Esophagus squamous epithelium (tissue), 5 donors: ENCODE measurements at regions of chr13 and their contacts with region 1.

Region 1: DNA sequence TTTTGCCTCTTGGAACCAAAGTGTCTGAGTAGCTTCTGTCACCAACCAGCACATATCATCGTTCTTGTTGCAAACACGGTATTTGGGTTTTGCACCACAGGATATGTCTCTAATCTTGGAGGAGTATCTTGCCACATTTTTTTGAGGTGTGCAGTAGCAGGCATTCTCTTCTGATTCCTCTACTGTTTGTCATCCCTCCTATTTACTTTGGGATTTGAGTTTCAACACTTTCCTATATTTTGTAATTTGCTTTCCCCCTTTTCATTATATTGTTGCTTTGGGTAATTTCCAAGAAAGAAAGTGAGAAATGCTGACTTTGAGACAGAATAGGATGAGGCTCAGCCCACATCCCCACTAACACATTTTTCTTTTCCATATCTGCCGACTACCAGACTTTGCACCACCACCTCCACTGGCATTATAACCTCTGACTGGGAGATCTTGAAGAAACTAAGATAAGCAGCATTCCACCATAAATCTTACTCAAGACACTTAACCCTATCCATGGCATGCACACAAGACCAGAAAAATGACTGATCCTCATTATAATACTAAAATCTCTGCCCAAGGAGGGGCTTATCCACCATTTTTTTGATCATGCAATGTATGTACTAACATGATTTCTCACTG is 12.0 kb upstream of the DZIP1 start:
- DNase-seq: no peak
- H3K4me3 ChIP-seq: no peak overlapping the region
- H3K27ac ChIP-seq: no peak overlapping the region
- H3K4me1 ChIP-seq: no peaks in the 10 kb centered on the region
- H3K27me3 ChIP-seq: peaks cover 0 to 7% (median 0%) of the 10 kb centered on the region in 4 donors
- CTCF ChIP-seq: no peak
- POLR2A ChIP-seq: no peak

Region 2: GRCh38 chr13:95540888-95541287 is 115.6 kb before region 1 on chr13:
- intact Hi-C with region 1: loop called (anchors 10 kb)
- DNase-seq: no peak
- H3K4me3 ChIP-seq: no peak overlapping the region
- H3K27ac ChIP-seq: no peak overlapping the region
- H3K4me1 ChIP-seq: peaks cover 0 to 30% (median under 1%) of the 10 kb centered on the region in 3 donors
- H3K27me3 ChIP-seq: no peaks in the 10 kb centered on the region
- CTCF ChIP-seq: no peak
- POLR2A ChIP-seq: no peak

Region 3: DNA sequence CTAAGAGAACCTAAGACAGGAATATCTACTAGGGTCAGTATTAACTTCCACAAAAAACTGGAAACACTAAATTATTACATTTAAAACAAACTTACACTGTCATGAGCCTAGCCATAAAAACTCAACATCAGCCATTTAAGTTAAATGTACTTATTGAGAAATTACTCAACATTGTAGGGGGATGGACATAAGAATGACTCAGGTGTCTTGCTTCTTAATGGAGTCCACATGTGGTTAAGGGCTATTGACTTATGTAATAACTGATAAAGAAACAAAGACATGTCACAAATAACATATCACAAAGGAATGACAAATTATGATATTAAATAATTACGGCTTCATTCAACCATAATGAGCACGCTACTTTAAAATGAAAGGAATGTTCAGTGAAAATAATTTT is 67.8 kb before region 1 on chr13:
- intact Hi-C with region 1: no loop called
- DNase-seq: no peak
- H3K4me3 ChIP-seq: no peak overlapping the region
- H3K27ac ChIP-seq: no peak overlapping the region
- H3K4me1 ChIP-seq: no peaks in the 10 kb centered on the region
- H3K27me3 ChIP-seq: no peaks in the 10 kb centered on the region
- CTCF ChIP-seq: no peak
- POLR2A ChIP-seq: no peak